ENCODE measurements at regions of chr5 and their contacts with region 1.

Region 1: DNA sequence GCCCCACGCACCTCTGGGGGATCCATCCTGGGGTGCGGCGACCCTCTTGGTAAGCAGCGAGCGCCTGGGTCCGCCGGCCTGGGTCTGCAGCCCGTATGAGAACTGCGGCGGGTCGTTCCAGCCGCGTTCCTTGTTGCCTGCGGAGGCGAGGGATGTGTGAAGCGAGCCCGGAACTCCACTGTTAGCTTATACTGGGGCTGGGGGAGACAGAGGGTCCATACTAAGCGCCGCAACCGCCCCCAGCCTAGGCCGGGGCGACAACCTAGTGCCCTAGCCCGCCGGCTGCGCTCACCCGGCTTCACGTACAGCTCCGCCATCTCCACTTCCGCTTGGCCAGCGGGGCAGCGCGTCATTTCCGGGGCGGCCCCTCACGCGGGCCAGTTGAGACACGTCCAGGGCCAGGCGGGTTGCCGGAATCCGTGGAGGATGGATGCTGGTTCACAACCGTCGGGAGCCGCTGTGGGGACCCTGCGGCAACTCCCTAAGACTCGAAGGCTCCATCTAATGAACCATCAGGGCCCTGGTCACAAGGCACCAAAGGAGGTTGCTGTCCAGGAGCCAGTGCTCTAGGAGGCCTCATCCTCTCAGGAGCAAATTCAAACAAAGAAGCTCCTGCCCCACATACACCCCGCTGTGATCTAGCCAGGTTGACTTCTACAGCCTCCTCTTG is at the start of gene SRA1:
- DNase-seq: peak; percentile 92
- H3K4me3 ChIP-seq: peak within 1 kb of the TSS; percentile 54 to 82
- H3K27ac ChIP-seq: peak within 1 kb of the TSS; percentile 76 to 77
- H3K4me1 ChIP-seq: peaks cover 5% of the 10 kb centered on the region
- H3K27me3 ChIP-seq: no peaks in the 10 kb centered on the region
- CTCF ChIP-seq: peak in 1 of 4 experiments; percentile 25
- POLR2A ChIP-seq: peak; percentile 92
- total RNA-seq, gene SRA1: 31.6 to 33.6 TPM

Region 2: GRCh38 chr5:140401362-140402257 is 155.7 kb before region 1 on chr5 and contains the start of gene ANKHD1:
- intact Hi-C with region 1: loop called (anchors 5 kb)
- DNase-seq: peak; percentile 100
- H3K4me3 ChIP-seq: peak within 1 kb of the TSS; percentile 93 to 96
- H3K27ac ChIP-seq: peak within 1 kb of the TSS; percentile 95
- H3K4me1 ChIP-seq: no peaks in the 10 kb centered on the region
- H3K27me3 ChIP-seq: no peaks in the 10 kb centered on the region
- CTCF ChIP-seq: peak in 2 of 4 experiments; percentile 48 to 62
- POLR2A ChIP-seq: peak; percentile 99
- total RNA-seq, gene ANKHD1: 69.7 to 112 TPM

Measured in prostate gland (tissue), 2 donors.